Posterior vena cava (tissue), 2 donors: ENCODE measurements at regions of chr4 and their contacts with region 1.

Region 1: DNA sequence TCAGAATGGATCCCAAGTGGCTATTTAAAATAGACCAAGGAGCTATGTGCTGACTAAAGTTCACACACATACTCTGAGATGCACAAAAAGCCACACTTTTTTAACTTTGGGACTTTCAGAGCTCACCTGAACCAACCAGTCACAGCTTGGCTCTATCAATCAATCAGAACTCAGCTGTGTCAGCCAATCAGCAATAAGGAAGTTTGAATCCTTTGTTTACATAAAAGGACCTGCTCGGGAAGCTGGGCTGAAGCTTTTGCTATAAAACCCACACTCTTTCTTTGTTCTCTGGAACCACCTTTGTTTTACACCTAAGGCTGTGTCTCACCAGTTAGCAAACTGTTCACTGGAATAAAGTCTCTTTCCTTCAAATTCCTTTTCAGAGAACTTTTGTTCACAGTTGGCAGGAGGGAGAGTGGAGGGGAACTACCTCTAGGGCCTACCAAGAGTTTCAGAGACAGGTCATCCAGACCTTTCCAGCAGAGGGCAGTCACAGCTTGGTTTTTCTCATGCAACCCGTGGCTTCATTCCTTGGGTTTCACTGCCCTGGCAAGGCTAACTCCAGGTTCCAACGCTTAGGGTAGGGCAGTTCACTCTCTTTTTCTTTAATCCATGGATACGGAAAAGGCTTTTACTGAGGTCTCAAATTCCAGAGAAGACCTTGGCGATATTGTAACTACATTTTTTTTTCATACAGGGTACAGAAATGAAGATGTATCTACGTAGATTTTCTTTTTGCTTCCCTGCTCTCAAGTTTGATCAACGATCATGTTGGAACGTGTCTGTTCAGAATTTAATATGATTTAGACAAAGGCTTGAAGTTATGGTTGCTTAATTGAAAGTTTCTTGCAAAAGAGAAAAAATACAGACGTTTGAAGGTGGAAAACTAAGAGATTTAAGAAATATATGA is 80.7 kb downstream of the GPRIN3 start:
- DNase-seq: peak; percentile 81

Region 2: DNA sequence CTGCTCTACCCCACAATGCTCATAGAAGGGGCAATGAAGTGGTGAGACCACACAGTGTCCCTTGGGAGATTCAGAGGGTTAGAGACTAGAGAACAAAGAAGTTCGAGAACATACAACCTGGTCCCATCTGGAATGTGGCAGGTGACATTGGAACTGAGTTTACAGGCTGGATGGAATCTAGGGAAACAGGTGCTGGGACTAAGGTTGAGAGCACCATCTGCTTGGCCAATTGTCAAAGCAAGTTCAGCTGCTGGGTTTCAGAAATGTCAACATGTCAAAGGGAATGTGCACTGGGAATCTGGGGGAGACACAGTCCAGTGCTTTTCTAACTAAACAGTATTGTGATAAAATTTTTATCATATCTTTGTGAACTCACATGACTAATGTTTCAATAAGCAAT is 154.0 kb before region 1 on chr4:
- intact Hi-C with region 1: no loop called
- DNase-seq: no peak

Region 3: DNA sequence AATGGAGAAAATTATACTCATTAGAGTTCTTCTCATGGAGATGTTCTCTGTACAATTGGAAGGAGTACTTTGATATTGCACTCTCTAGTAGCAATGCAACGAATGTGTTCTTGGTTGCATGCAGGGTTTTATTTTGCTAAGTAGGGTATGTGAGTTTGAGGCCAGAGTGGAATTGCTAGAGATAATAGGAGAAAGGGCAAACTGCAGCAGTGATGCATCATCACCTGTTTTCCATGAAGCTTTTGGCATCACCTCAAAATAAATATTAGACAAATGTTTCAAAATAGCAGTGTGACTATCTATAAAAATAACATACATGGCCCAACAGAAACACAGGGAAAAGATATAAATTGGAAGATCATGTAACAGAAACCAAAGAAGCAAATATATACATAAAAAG is 22.3 kb before region 1 on chr4:
- intact Hi-C with region 1: no loop called
- DNase-seq: no peak

Region 4: GRCh38 chr4:89434364-89434988 is 207.6 kb after region 1 on chr4:
- intact Hi-C with region 1: loop called (anchors 5 to 10 kb)
- DNase-seq: no peak

Region 5: GRCh38 chr4:89463341-89463740 is 236.4 kb after region 1 on chr4:
- intact Hi-C with region 1: no loop called
- DNase-seq: no peak